Transverse colon (tissue), 4 donors: ENCODE measurements at regions of chr1 and their contacts with region 1.

Region 1: GRCh38 chr1:226820941-226821718 is 49.3 kb upstream of the PSEN2 start:
- DNase-seq: peak; percentile 72
- H3K4me3 ChIP-seq: no peak overlapping the region
- H3K27ac ChIP-seq: peak overlapping the region; percentile 76 to 86 (median 84)
- H3K4me1 ChIP-seq: peaks cover 5 to 10% (median 8%) of the 10 kb centered on the region in 4 donors
- H3K27me3 ChIP-seq: no peaks in the 10 kb centered on the region
- CTCF ChIP-seq: no peak
- EP300 ChIP-seq: peak; percentile 97
- POLR2A ChIP-seq: no peak

Region 2: GRCh38 chr1:226649780-226650179 is 171.3 kb before region 1 on chr1:
- in situ Hi-C with region 1: no loop called
- intact Hi-C with region 1: loop called (anchors 5 kb)
- DNase-seq: no peak
- H3K4me3 ChIP-seq: no peak overlapping the region
- H3K27ac ChIP-seq: no peak overlapping the region
- H3K4me1 ChIP-seq: peaks cover 28 to 30% (median 30%) of the 10 kb centered on the region in 4 donors
- H3K27me3 ChIP-seq: no peaks in the 10 kb centered on the region
- CTCF ChIP-seq: no peak
- EP300 ChIP-seq: no peak
- POLR2A ChIP-seq: no peak

Region 3: GRCh38 chr1:226891846-226892523 is 70.9 kb after region 1 on chr1:
- in situ Hi-C with region 1: no loop called
- intact Hi-C with region 1: no loop called
- DNase-seq: no peak
- H3K4me3 ChIP-seq: no peak overlapping the region
- H3K27ac ChIP-seq: no peak overlapping the region
- H3K4me1 ChIP-seq: no peaks in the 10 kb centered on the region
- H3K27me3 ChIP-seq: no peaks in the 10 kb centered on the region
- CTCF ChIP-seq: no peak
- EP300 ChIP-seq: no peak
- POLR2A ChIP-seq: no peak

Region 4: DNA sequence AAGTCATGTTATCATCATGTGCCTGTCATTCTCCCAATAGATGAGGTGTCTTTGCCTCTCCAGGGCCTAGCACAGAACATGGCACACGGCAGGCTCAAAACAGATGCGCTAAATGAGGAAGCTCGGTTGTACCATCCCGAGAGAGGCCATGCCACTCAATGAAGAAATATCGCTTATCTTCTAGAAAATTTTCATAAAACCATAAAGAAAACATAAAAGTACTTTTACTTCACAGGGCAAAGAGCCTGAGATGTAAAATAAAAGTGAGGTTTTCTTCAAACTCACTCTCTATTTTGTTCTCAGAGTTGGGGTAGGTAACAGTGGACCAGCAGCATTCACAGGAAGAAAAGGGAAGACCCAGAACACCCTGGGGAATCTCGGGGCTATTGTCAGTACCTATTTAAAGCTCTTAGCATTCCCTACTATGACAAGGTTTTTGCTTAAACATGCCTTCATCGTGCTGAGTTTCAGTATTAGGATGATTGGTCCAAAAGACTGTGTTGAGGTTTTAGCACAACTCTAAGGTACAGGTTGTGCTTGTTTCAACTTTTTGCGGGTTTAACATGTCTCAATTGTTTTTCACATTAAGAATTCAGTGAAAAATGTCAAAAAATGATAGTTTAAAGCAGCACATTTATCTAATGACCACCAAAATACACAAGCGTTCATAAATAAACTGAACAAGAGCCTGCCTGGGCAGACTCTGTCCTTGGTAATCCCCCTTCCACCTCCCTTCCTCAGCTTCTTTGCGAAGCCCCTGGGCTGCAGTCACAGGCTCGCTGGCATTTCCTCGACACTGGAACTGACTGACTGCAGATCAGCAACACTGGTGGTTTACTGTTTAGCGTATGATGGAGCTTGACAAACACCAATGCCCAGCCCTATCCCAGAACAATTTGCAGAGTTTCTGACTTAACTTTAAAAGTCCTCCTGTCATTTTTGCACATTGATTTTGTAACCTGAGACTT is 174.5 kb after region 1 on chr1:
- in situ Hi-C with region 1: no loop called
- intact Hi-C with region 1: no loop called
- DNase-seq: no peak
- H3K4me3 ChIP-seq: no peak overlapping the region
- H3K27ac ChIP-seq: no peak overlapping the region
- H3K4me1 ChIP-seq: peaks cover 0 to 10% (median 6%) of the 10 kb centered on the region in 4 donors
- H3K27me3 ChIP-seq: no peaks in the 10 kb centered on the region
- CTCF ChIP-seq: no peak
- EP300 ChIP-seq: no peak
- POLR2A ChIP-seq: no peak